ENCODE measurements at regions of chr17 and their contacts with region 1.

Region 1: DNA sequence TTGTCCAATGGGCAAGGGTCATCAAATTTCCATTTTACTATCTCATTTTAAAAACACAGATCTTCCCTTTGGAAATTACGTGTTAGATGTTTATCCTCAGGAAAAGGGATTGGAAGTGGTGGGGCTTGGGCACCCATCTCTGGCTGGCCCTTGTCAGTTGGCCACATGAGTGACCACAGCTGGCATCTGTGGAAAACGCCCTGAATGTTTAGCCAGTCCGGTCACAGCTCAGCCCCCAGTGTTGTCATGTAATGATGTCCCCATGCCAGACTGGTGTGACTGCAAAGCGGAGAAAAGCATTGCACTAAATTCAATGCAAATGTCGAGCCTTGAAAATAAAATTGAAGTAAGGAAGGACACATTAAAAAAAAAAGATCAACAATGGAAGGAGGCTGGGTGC is 53.0 kb downstream of the TMC6 start:
- DNase-seq: no peak
- ATAC-seq: no peak
- H3K4me3 ChIP-seq: no peak overlapping the region
- H3K27ac ChIP-seq: no peak overlapping the region
- H3K4me1 ChIP-seq: peaks cover 0 to 10% (median 0%) of the 10 kb centered on the region in 9 donors
- H3K27me3 ChIP-seq: no peaks in the 10 kb centered on the region
- CTCF ChIP-seq: no peak

Region 2: GRCh38 chr17:77690271-77691161 is 385.0 kb before region 1 on chr17:
- intact Hi-C with region 1: no loop called
- DNase-seq: peak in 1 of 2 donors; percentile 28
- ATAC-seq: peak; percentile 23 to 73 (median 46)
- H3K4me3 ChIP-seq: peak overlapping the region in 6 of 10 donors; percentile 0 to 39 (median 29)
- H3K27ac ChIP-seq: peak overlapping the region in 5 of 10 donors; percentile 4 to 48 (median 18)
- H3K4me1 ChIP-seq: peaks cover 0 to 16% (median 8%) of the 10 kb centered on the region in 9 donors
- H3K27me3 ChIP-seq: peaks cover 0 to 28% (median 8%) of the 10 kb centered on the region in 7 donors
- CTCF ChIP-seq: no peak

Region 3: GRCh38 chr17:78019367-78019975 is 56.1 kb before region 1 on chr17:
- intact Hi-C with region 1: loop called in 5 of 10 experiments (anchors 10 kb)
- DNase-seq: no peak
- ATAC-seq: peak in 1 of 8 donors; percentile 39
- H3K4me3 ChIP-seq: no peak overlapping the region
- H3K27ac ChIP-seq: peak overlapping the region in 3 of 10 donors; percentile 2 to 32 (median 3)
- H3K4me1 ChIP-seq: peaks cover 0 to 28% (median 13%) of the 10 kb centered on the region in 9 donors
- H3K27me3 ChIP-seq: no peaks in the 10 kb centered on the region
- CTCF ChIP-seq: peak in 8 of 9 donors; percentile 34 to 73 (median 66)

Region 4: DNA sequence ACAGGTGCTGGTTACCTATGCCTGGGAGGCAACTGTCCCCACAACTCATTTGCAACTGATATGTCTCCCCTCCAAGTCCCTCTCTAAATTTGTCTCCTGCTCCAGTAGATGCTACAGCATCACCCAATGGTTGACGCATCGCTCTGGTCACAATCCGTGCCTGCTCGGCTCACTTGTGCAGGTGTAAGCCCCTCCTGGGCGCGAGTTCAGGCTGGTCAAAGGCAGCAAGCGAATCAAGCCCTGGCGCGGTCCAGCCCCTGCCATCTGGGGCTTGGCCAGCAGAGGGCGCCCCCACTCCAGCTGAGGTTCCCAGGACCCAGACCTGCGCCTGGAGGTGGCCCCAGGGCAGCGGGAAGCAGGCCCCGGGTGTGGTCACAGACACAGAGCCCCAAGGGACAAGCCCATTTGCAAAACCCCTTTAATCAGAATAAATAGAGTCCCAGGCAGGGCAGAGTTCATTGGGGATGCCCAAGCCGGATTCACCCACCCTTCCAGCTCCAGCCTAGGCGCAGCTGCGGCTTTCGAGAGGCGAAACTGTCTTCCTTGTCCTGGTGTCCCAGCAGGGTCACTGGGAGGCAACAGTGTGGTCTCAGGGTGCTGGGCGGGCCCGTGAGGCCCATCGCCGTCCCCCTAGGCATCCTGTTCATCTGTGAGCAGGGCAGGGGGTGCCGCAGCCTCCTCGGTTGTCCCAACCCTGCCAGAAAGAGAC is 37.1 kb after region 1 on chr17:
- intact Hi-C with region 1: no loop called
- DNase-seq: peak; percentile 77 to 85
- ATAC-seq: peak; percentile 66 to 78 (median 70)
- H3K4me3 ChIP-seq: no peak overlapping the region
- H3K27ac ChIP-seq: peak overlapping the region in 8 of 10 donors; percentile 11 to 53 (median 29)
- H3K4me1 ChIP-seq: peaks cover 19 to 76% (median 31%) of the 10 kb centered on the region in 9 donors
- H3K27me3 ChIP-seq: no peaks in the 10 kb centered on the region
- CTCF ChIP-seq: peak; percentile 99 to 100 (median 100)

Measured in heart right ventricle (tissue), 16 donors.